Psoas muscle (tissue), 8 donors: ENCODE measurements at regions of chr22 and their contacts with region 1.

Region 1: GRCh38 chr22:35894937-35895708 is 133.5 kb downstream of the RBFOX2 start:
- DNase-seq: no peak
- ATAC-seq: peak; percentile 79 to 87 (median 86)
- H3K4me3 ChIP-seq: peak overlapping the region; percentile 65
- H3K27ac ChIP-seq: peak overlapping the region; percentile 89
- H3K4me1 ChIP-seq: peaks cover 55% of the 10 kb centered on the region
- H3K27me3 ChIP-seq: no peaks in the 10 kb centered on the region
- CTCF ChIP-seq: no peak

Region 2: DNA sequence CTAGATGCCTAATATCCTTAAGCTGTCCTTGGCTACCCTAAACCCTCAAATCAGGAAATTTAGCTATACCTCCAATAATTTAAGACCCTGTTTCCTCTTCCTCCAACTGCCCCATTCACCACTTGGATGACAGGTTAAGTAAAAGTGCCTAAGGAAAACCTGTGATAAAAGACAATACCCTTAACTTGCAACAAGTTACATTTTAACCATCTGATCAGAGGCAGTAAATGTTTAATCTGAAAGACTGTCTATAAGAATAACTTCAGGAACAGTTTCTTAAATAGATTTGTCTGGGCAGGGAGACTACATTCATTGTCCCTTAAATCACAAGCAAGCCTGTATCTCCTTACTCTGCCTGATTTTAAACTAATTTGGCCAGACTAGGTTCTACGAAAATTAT is 48.3 kb before region 1 on chr22:
- intact Hi-C with region 1: loop called in 1 of 2 experiments (anchors 5 kb)
- DNase-seq: no peak
- ATAC-seq: no peak
- H3K4me3 ChIP-seq: peak overlapping the region; percentile 67
- H3K27ac ChIP-seq: peak overlapping the region; percentile 85
- H3K4me1 ChIP-seq: peaks cover 39% of the 10 kb centered on the region
- H3K27me3 ChIP-seq: no peaks in the 10 kb centered on the region
- CTCF ChIP-seq: no peak